Gastrocnemius medialis (tissue), 4 donors: ENCODE measurements at regions of chr1 and their contacts with region 1.

Region 1: GRCh38 chr1:155001675-155002463 is 733 bp upstream of the ZBTB7B start:
- DNase-seq: peak; percentile 100
- ATAC-seq: peak; percentile 45 to 54
- H3K4me3 ChIP-seq: peak overlapping the region; percentile 83 to 99 (median 94)
- H3K27ac ChIP-seq: peak overlapping the region; percentile 95 to 99 (median 98)
- H3K4me1 ChIP-seq: peaks cover 34 to 52% of the 10 kb centered on the region in 2 donors
- H3K27me3 ChIP-seq: no peaks in the 10 kb centered on the region
- CTCF ChIP-seq: peak in 2 of 5 experiments; percentile 13 to 55
- POLR2A ChIP-seq: peak; percentile 90 to 92

Region 2: DNA sequence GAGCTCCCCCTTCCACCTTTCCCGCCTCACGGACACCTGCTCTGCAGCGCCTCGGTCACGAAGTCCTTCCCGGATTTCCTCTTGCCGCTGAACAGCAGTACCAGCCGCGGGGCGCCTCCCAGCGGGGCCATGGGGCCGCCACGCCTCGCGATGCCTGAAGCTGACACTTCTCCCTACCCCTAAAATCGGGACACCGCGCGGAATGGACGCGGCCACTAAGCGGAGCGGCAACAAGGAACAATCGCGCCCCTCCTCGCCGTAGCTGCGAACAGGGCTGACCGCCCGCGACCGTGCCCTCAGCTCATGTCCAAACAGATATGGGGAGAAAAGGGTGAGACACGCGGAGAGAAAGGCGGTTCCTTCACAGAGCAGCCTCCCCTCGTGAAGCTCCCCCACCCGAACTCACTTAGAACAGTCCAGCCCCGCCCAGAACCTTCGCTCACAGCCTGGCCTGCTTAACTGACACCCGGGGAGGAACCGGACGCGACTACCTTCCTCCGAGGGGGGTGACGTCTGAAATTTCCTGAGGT is 65.2 kb before region 1 on chr1 and contains the start of gene PMVK:
- in situ Hi-C with region 1: no loop called
- intact Hi-C with region 1: loop called (anchors 2 kb)
- DNase-seq: peak; percentile 92 to 95
- ATAC-seq: peak; percentile 94 to 96
- H3K4me3 ChIP-seq: peak within 1 kb of the TSS; percentile 65 to 97 (median 83)
- H3K27ac ChIP-seq: peak within 1 kb of the TSS; percentile 93 to 99 (median 98)
- H3K4me1 ChIP-seq: peaks cover 11 to 15% of the 10 kb centered on the region in 2 donors
- H3K27me3 ChIP-seq: no peaks in the 10 kb centered on the region
- CTCF ChIP-seq: peak in 3 of 5 experiments; percentile 36 to 55 (median 42)
- POLR2A ChIP-seq: peak in 1 of 2 donors; percentile 30
- total RNA-seq, gene PMVK: 4.6 to 7.6 (median 6.1) TPM

Region 3: GRCh38 chr1:154974063-154974807 is 27.6 kb before region 1 on chr1 and contains the start of gene CKS1B:
- in situ Hi-C with region 1: no loop called
- intact Hi-C with region 1: loop called (anchors 1 kb)
- DNase-seq: peak; percentile 97 to 99
- ATAC-seq: peak; percentile 83
- H3K4me3 ChIP-seq: peak within 1 kb of the TSS; percentile 67 to 75 (median 74)
- H3K27ac ChIP-seq: peak within 1 kb of the TSS; percentile 93 to 96 (median 95)
- H3K4me1 ChIP-seq: peaks cover 49 to 54% of the 10 kb centered on the region in 2 donors
- H3K27me3 ChIP-seq: no peaks in the 10 kb centered on the region
- CTCF ChIP-seq: no peak
- POLR2A ChIP-seq: peak; percentile 72 to 73
- total RNA-seq, gene CKS1B: 3.6 to 15.7 (median 7.9) TPM

Region 4: DNA sequence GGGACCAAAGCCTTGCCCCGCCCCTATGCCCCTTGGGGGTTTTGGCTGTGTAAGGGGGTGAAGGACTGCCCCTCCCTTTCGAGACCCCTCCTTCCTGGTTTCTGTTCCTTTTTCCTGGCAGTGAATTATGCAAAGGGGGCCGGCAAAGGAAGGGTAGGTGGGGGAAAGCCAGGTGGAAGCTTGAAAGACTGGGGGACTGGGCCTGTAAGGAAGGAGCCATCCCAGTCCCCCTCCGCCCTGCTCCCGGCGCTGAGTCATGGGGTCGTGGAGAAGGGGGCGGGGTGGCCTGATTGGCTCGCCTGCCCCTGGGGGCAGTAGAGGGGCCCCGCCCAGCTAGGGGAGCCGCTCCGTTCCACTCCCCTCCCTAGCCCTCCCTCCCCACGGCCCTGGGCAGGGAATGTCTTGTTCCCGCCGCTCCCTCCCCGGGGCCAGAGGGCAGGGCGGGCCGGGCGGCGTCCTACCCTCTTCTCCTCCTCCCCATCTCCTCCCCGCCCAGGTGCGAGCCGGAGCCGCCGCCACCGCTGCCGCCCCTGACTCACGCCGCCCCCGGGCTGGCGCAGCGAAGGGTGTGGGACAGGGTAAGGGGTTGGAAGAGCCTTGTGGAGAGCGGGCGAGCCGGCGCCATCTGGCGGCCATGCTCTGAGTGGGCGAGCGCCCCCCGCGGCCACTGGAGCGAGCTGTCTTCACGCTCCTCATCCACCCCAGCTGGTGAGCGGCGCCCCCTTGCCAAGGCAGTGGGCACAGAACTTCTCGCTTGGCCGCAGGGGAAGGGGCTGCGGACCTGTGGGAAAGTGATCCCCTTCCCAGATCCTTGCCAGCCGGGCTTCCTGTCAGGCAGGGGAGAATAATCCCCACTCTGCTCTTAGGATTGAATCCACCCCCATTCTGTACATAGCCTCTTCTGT is 15.4 kb after region 1 on chr1:
- in situ Hi-C with region 1: no loop called
- intact Hi-C with region 1: loop called (anchors 1 kb)
- DNase-seq: peak; percentile 70 to 90
- ATAC-seq: peak; percentile 84 to 88
- H3K4me3 ChIP-seq: peak overlapping the region; percentile 48 to 52 (median 50)
- H3K27ac ChIP-seq: peak overlapping the region; percentile 80 to 95 (median 86)
- H3K4me1 ChIP-seq: peaks cover 21 to 26% of the 10 kb centered on the region in 2 donors
- H3K27me3 ChIP-seq: no peaks in the 10 kb centered on the region
- CTCF ChIP-seq: peak; percentile 96 to 100 (median 97)
- POLR2A ChIP-seq: peak; percentile 37 to 47

Region 5: DNA sequence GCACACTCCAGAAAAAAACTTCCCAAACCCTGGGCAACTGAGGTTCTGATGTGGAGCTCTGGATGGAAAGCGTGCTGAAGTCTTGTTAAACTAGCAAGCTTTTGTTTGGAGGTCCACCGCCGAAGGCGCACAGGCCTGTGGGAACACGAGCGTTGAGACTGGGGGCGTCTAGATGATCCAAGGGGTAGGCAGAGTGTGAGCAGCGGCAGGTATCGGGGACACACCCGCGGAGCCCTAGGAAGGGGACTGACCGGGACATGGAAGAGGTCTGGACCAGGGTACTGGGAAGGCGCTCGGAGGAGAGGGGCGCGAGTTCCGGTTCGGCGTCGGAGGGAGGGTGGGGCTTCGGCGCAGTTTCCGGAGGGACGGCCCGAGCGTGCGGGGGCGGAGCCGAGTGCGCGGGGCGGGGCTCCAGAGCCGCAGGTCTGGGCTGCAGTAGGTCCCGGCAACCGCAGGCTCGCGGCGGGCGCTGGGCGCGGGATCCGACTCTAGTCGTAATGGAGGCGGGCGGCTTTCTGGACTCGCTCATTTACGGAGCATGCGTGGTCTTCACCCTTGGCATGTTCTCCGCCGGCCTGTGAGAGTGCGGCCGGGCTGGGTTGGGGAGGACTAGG is 133.7 kb after region 1 on chr1 and contains the start of gene SLC50A1:
- in situ Hi-C with region 1: no loop called
- intact Hi-C with region 1: loop called (anchors 5 kb)
- DNase-seq: peak; percentile 87 to 93
- ATAC-seq: peak; percentile 69 to 78
- H3K4me3 ChIP-seq: peak within 1 kb of the TSS; percentile 82 to 93 (median 87)
- H3K27ac ChIP-seq: peak within 1 kb of the TSS; percentile 96 to 100 (median 98)
- H3K4me1 ChIP-seq: peaks cover 55 to 61% of the 10 kb centered on the region in 2 donors
- H3K27me3 ChIP-seq: no peaks in the 10 kb centered on the region
- CTCF ChIP-seq: peak; percentile 43 to 64 (median 59)
- POLR2A ChIP-seq: peak; percentile 90 to 92
- total RNA-seq, gene SLC50A1: 3.5 to 11.4 (median 8.2) TPM

Region 6: GRCh38 chr1:156456622-156457465 is 1455.0 kb after region 1 on chr1:
- in situ Hi-C with region 1: no loop called
- intact Hi-C with region 1: loop called (anchors 5 kb)
- DNase-seq: peak; percentile 99
- ATAC-seq: peak; percentile 84 to 85
- H3K4me3 ChIP-seq: peak overlapping the region; percentile 60 to 76 (median 73)
- H3K27ac ChIP-seq: peak overlapping the region; percentile 96 to 99 (median 98)
- H3K4me1 ChIP-seq: peaks cover 4 to 8% of the 10 kb centered on the region in 2 donors
- H3K27me3 ChIP-seq: no peaks in the 10 kb centered on the region
- CTCF ChIP-seq: peak in 1 of 5 experiments; percentile 16
- POLR2A ChIP-seq: peak; percentile 86 to 95